ENCODE measurements at regions of chr6 and their contacts with region 1.

Region 1: GRCh38 chr6:153013438-153013837 is 10.9 kb upstream of the MTRF1L start:
- DNase-seq: no peak
- H3K4me3 ChIP-seq: no peak overlapping the region
- H3K27ac ChIP-seq: no peak overlapping the region
- H3K27me3 ChIP-seq: no peaks in the 10 kb centered on the region
- CTCF ChIP-seq: no peak

Region 2: DNA sequence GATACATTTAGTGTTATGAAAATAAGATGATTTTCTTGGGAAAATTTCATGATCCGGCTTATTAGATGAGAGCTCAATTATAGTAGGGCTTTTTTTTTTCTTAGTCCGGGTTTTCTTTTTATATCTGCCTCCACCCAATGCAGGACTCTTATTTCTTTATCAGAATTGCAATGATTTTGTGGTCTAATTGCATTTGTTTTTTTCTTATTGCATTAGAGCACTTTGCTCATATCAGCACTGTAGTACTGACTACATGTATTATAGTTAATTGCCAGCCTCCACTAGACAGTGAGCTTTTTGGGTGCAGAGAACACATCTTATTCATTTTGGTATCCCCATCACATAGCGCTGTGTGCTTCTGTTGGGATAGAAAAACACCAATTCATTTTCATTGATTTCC is 80.6 kb before region 1 on chr6:
- CTCF ChIA-PET with region 1: no interaction called
- POLR2A ChIA-PET with region 1: no interaction called
- DNase-seq: no peak
- H3K4me3 ChIP-seq: no peak overlapping the region
- H3K27ac ChIP-seq: no peak overlapping the region
- H3K27me3 ChIP-seq: peaks cover 3% of the 10 kb centered on the region
- CTCF ChIP-seq: no peak

Region 3: GRCh38 chr6:152982768-152983636 is 30.4 kb before region 1 on chr6 and contains the start of gene FBXO5:
- CTCF ChIA-PET with region 1: no interaction called
- POLR2A ChIA-PET with region 1: no interaction called
- DNase-seq: peak; percentile 94
- H3K4me3 ChIP-seq: peak within 1 kb of the TSS; percentile 92
- H3K27ac ChIP-seq: peak within 1 kb of the TSS; percentile 93
- H3K27me3 ChIP-seq: no peaks in the 10 kb centered on the region
- CTCF ChIP-seq: no peak
- polyA plus RNA-seq, gene FBXO5: 7.1 and 13.1 TPM in 2 replicates

Region 4: GRCh38 chr6:153023977-153024708 is 10.7 kb after region 1 on chr6:
- CTCF ChIA-PET with region 1: interaction called, 12 read pairs
- POLR2A ChIA-PET with region 1: no interaction called
- DNase-seq: no peak
- H3K4me3 ChIP-seq: no peak overlapping the region
- H3K27ac ChIP-seq: no peak overlapping the region
- H3K27me3 ChIP-seq: no peaks in the 10 kb centered on the region
- CTCF ChIP-seq: peak; percentile 76

Measured in AG04450 (cell line).